GM18951 (cell line): ENCODE measurements at regions of chrX and their contacts with region 1.

Region 1: GRCh38 chrX:135581496-135581895 is 61.0 kb downstream of the INTS6L start:
- POLR2A ChIP-seq: no peak

Region 2: DNA sequence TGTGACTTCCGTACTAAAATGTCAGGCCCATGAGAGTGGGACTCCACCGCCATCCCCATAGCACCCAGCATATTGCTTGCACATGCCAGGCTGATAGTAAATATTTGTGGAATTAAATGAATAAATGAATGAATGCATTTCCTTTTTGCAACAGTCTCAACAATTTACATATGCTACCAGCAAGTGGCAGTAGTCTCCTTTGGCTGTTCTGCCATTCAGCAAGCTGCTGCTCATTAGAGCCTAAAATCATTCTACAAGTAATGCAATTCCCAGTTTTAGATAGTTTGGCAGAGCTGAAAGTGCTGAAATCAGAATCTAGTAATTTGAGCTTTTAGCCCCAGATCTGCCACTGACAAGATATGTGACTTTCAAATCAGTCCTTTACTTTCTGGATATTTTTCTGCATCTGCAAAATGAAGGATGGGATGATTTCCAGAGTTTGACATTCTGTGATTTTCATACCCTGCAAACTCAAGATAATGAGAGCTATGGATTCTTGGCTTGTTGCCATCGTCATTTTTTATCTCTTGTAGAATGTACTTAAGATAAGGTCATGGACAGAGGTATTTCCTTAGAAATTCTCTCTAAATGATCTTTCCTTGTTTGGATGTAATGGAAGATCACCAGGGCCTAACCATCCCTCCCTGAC is 96.7 kb before region 1 on chrX:
- in situ Hi-C with region 1: loop called (anchors 10 kb)
- POLR2A ChIP-seq: no peak